Right ventricle myocardium inferior (tissue), 1 donor: ENCODE measurements at regions of chr9 and their contacts with region 1.

Region 1: GRCh38 chr9:12775679-12776512 is 1.1 kb downstream of the LURAP1L start:
- DNase-seq: peak; percentile 57
- ATAC-seq: peak; percentile 95

Region 2: DNA sequence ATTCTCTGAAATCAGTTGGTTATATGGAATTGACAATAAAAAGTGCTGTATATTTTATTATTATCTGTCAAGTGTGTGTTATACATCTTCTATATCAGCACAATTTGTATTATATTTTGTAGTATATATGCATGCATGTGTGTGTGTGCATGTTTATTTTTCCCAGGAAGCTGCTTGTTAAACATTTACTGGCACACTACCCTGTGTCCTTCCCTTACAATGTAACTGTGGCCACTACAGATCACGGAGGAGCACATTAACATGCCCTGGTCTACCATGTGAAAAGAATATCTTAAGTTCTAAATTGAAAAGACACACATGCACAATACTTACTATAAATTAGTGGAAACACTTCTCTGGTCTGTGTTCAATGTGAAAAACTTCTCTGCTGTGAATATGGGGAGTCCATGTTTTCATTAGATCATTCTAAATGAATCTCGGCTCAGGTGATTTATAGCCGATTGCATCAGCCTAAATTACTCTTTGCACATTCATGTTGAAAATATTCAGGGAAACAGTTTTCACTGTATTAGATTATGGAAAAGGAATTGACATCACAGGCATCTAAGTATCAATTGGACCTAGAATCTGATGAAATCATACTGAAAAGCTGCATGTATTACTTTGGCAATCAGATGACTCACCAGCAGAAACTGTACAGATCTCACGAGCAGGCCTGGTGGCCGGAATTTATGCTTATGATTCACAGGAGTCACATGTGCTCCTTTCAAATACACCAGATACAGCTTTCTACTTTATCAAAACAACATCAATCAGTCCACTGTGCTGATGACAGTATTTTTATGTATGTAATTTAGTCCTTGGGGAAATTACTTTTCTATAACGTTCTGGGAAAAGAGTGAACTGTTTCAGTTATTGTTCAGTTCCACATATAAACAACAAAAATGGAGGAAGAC is 38.3 kb after region 1 on chr9:
- intact Hi-C with region 1: loop called (anchors 5 kb)
- DNase-seq: no peak
- ATAC-seq: peak; percentile 71

Region 3: DNA sequence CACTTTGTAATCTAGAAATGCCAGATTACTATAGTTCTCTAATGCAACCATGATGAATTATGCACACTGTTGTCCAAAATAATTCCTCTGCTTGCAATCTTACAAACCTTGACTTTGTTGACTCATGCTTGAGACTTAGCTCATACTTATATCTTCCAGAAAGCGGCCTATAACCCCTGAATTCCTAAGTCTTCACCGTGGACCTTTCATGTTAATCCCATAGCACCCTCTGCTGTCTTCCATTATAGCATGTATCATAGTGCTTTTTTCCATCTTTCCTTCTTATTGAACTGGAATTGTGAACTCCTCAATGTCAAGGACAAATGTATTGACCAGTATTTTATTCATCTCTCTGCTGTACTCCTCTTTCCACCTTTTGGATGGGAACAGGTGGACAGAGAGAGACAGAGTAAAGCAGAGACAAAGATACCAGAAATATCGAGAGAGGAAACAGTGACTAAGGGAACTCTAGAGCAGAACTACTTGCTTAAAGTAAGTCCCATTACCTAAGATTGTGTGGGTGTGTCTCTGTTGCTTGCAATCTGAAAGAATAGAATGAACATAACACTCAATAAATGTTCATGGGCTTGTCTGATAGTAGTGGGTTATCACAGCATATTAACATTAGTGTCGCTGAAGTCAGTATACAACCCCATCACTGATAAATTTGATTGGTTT is 109.0 kb after region 1 on chr9:
- intact Hi-C with region 1: loop called (anchors 5 kb)
- DNase-seq: no peak
- ATAC-seq: peak; percentile 61

Region 4: GRCh38 chr9:12955530-12956163 is 179.8 kb after region 1 on chr9:
- intact Hi-C with region 1: no loop called
- DNase-seq: no peak
- ATAC-seq: no peak